CD14-positive monocyte (primary cell): ENCODE measurements at regions of chr5 and their contacts with region 1.

Region 1: DNA sequence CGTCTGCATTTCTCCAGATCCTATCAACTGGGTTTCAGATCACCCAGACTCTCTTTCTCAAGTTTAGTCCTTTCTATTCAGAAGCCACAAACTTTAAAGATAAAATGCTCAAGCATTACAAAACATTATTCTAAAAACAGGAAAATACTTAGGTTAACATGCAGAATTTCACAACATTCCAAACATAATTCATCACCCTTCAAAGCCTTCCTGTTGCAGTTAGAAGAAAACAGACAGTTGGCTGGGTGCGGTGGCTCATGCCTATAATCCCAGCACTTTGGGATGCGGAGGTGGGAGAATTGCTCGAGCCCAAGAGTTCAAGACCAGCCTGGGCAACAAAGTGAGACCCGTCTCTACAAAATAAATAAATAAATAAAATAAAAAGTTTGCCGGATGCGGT is 7.7 kb upstream of the OCLN start:
- DNase-seq: no peak
- H3K4me3 ChIP-seq: no peak overlapping the region
- H3K4me3 Mint-ChIP-seq: no peak overlapping the region
- H3K27ac ChIP-seq: no peak overlapping the region
- H3K27ac Mint-ChIP-seq: peak overlapping the region in 1 of 7 donors; percentile 63
- H3K4me1 ChIP-seq: peaks cover 3 to 9% of the 10 kb centered on the region in 2 donors
- H3K4me1 Mint-ChIP-seq: peaks cover 12% of the 10 kb centered on the region
- H3K27me3 ChIP-seq: no peaks in the 10 kb centered on the region
- H3K27me3 Mint-ChIP-seq: no peaks in the 10 kb centered on the region
- CTCF ChIP-seq: no peak

Region 2: GRCh38 chr5:69300537-69301203 is 184.2 kb before region 1 on chr5:
- intact Hi-C with region 1: no loop called
- DNase-seq: no peak
- H3K4me3 ChIP-seq: no peak overlapping the region
- H3K4me3 Mint-ChIP-seq: no peak overlapping the region
- H3K27ac ChIP-seq: no peak overlapping the region
- H3K27ac Mint-ChIP-seq: peak overlapping the region in 3 of 7 donors; percentile 16 to 65 (median 55)
- H3K4me1 ChIP-seq: no peaks in the 10 kb centered on the region
- H3K4me1 Mint-ChIP-seq: peaks cover 1% of the 10 kb centered on the region
- H3K27me3 ChIP-seq: no peaks in the 10 kb centered on the region
- H3K27me3 Mint-ChIP-seq: no peaks in the 10 kb centered on the region
- CTCF ChIP-seq: no peak

Region 3: GRCh38 chr5:69444127-69444754 is 40.6 kb before region 1 on chr5:
- intact Hi-C with region 1: loop called in 1 of 2 experiments (anchors 2 kb)
- DNase-seq: no peak
- H3K4me3 ChIP-seq: no peak overlapping the region
- H3K4me3 Mint-ChIP-seq: no peak overlapping the region
- H3K27ac ChIP-seq: no peak overlapping the region
- H3K27ac Mint-ChIP-seq: no peak overlapping the region
- H3K4me1 ChIP-seq: no peaks in the 10 kb centered on the region
- H3K4me1 Mint-ChIP-seq: peaks cover 7% of the 10 kb centered on the region
- H3K27me3 ChIP-seq: no peaks in the 10 kb centered on the region
- H3K27me3 Mint-ChIP-seq: peaks cover 1 to 2% (median 2%) of the 10 kb centered on the region in 3 donors
- CTCF ChIP-seq: no peak

Region 4: DNA sequence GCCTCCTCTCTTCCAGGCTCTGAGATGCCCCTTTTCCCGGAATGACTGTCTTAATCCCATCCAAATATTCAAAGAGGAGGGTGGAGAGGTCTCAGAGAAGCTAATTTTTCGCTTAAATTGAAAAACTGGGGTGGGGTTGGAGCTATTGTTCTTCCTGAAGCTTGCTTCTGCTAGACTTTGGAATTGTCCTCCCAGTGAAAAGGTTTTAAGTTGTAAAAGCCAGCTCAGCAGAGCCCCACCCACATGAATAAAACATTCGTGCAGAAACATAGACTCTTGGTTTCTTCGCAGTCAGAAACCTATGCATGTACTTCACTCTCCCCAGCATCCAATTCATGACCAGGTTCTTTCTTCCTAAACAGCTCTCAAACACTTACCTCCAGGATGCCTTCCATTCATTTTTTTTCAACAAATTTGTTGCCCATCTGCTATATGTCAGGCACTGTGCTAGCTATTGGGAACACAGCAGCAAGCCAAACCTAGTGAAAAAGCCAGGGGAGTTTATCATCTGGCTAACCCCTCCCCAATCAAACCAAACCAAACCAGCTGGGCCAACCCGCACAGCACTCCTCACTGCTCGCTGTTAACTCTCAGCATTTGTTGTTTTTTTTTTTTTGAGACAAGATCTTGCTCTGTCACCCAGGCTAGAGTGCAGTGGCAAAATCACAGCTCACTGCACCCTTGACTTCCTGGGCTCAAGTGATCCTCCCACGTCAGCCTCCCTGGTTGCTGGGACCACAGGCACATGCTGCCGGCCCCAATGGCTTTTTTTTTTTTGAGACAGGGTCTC is 30.2 kb before region 1 on chr5:
- intact Hi-C with region 1: no loop called
- DNase-seq: no peak
- H3K4me3 ChIP-seq: no peak overlapping the region
- H3K4me3 Mint-ChIP-seq: no peak overlapping the region
- H3K27ac ChIP-seq: no peak overlapping the region
- H3K27ac Mint-ChIP-seq: no peak overlapping the region
- H3K4me1 ChIP-seq: no peaks in the 10 kb centered on the region
- H3K4me1 Mint-ChIP-seq: peaks cover 2% of the 10 kb centered on the region
- H3K27me3 ChIP-seq: no peaks in the 10 kb centered on the region
- H3K27me3 Mint-ChIP-seq: peaks cover 1 to 4% (median 1%) of the 10 kb centered on the region in 3 donors
- CTCF ChIP-seq: no peak